Dorsolateral prefrontal cortex (tissue), 120 donors: ENCODE measurements at regions of chr1 and their contacts with region 1.

Region 1: GRCh38 chr1:226786550-226786949 is 47.5 kb upstream of the ITPKB start:
- DNase-seq: no peak
- H3K4me3 ChIP-seq: peak overlapping the region in 1 of 59 donors; percentile 15
- H3K27ac ChIP-seq: peak overlapping the region in 56 of 59 donors; percentile 18 to 97 (median 78)
- H3K27me3 ChIP-seq: no peaks in the 10 kb centered on the region
- CTCF ChIP-seq: no peak

Region 2: GRCh38 chr1:226608699-226609505 is 177.6 kb before region 1 on chr1:
- intact Hi-C with region 1: no loop called
- DNase-seq: peak in 9 of 10 donors; percentile 42 to 76 (median 68)
- H3K4me3 ChIP-seq: no peak overlapping the region
- H3K27ac ChIP-seq: no peak overlapping the region
- H3K27me3 ChIP-seq: no peaks in the 10 kb centered on the region
- CTCF ChIP-seq: peak; percentile 59 to 89 (median 82)

Region 3: DNA sequence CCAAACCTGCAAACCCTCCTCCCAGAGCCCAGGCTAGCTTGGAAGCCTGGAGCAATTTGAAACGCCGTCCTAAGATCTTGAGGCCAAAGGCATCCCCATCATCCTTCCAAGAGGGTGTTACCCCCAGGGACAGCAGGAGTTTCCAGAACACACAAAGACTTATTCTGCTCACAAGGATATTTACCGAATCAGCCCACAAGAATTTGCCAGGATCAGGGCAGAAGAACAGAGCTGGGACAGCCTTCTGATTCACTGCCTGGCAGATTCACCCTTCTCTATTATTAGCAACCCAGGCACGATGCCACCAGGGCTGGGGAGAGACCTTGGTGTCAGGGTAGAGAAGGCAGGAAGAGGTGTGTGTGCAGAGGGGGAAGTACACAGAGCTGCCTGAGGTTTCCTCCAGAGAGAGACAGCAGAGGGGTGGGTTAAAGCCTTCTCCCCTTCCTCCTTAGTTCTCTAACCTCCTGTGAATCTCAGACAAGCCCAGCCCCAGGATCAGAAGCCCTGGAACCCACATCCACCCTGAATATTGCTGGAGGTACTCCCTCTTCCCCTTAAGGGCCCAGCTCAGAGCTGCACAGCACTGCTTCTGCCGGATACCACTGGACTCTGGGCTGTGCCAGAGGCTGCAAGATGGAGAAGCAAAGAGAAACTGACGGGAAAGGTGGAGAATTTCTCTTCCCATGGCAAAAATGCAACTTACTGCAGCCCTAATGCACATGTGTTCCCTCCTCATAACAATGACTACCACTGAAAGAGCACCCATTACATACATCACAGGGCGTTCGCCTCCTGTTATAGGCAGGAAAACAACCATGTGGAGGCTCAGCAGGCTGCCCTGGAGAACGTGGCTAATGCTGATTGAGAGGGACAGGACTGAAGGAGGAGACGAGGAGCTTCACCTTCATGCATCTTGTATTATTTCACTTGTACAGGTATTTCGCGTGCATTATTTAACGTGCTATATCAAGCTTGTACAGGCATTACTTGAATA is 109.2 kb before region 1 on chr1:
- intact Hi-C with region 1: no loop called
- DNase-seq: peak in 9 of 10 donors; percentile 70 to 96 (median 81)
- H3K4me3 ChIP-seq: peak overlapping the region in 27 of 59 donors; percentile 0 to 51 (median 14)
- H3K27ac ChIP-seq: peak overlapping the region in 49 of 59 donors; percentile 76 to 99 (median 96)
- H3K27me3 ChIP-seq: no peaks in the 10 kb centered on the region
- CTCF ChIP-seq: peak in 9 of 56 donors; percentile 1 to 43 (median 15)

Region 4: DNA sequence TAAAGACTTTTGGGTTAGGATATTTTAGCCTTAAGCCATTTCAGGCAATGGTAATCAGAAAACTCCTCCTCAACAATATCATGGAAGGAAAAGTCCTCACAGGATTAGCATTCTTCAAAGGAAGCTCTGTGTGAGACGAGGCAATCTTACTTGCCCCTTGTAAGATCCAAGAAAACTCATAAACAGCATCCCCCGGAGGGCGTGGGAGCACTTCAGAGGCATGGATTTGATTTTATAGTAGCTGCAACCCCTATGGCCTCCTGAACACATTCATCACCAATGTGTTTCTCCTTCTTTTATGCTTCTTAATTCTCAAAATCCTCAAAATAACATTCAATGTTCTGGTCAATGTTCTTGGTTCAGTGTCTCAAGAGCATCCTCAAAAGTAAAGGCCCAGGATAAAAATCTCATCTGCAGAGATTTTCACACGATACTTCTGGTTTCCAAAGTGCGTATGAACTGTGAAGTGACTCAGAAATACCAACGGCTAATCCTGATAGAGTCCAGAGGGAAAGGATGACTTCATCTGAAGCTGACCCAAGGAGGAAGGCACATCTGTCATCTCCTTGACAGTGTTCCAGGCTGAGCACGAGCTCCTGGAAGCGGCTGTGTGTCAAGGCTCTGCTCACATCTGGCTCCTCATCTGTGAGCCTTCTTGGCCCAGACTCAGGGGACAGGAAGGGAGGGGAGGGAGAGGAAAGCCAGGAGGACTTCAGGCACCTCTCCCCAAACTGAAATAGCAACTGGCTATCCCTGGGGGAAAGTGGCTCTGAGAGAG is 34.6 kb after region 1 on chr1:
- intact Hi-C with region 1: loop called (anchors 1 to 2 kb)
- DNase-seq: peak in 1 of 10 donors; percentile 22
- H3K4me3 ChIP-seq: no peak overlapping the region
- H3K27ac ChIP-seq: peak overlapping the region in 55 of 59 donors; percentile 0 to 91 (median 72)
- H3K27me3 ChIP-seq: no peaks in the 10 kb centered on the region
- CTCF ChIP-seq: no peak